AG04449 (cell line): ENCODE measurements at regions of chr2 and their contacts with region 1.

Region 1: GRCh38 chr2:176554101-176555048 is 285.1 kb downstream of the MTX2 start:
- DNase-seq: no peak
- H3K4me3 ChIP-seq: peak overlapping the region; percentile 50
- CTCF ChIP-seq: peak; percentile 52

Region 2: GRCh38 chr2:176140513-176141317 is 413.7 kb before region 1 on chr2:
- CTCF ChIA-PET with region 1: interaction called, 119 read pairs
- POLR2A ChIA-PET with region 1: interaction called, 16 read pairs
- DNase-seq: no peak
- H3K4me3 ChIP-seq: peak overlapping the region; percentile 71
- CTCF ChIP-seq: peak; percentile 98

Region 3: GRCh38 chr2:176151442-176152369 is 402.7 kb before region 1 on chr2 and contains the start of gene HOXD4:
- CTCF ChIA-PET with region 1: interaction called, 12 read pairs
- POLR2A ChIA-PET with region 1: no interaction called
- DNase-seq: no peak
- H3K4me3 ChIP-seq: peak within 1 kb of the TSS; percentile 39
- CTCF ChIP-seq: no peak

Region 4: DNA sequence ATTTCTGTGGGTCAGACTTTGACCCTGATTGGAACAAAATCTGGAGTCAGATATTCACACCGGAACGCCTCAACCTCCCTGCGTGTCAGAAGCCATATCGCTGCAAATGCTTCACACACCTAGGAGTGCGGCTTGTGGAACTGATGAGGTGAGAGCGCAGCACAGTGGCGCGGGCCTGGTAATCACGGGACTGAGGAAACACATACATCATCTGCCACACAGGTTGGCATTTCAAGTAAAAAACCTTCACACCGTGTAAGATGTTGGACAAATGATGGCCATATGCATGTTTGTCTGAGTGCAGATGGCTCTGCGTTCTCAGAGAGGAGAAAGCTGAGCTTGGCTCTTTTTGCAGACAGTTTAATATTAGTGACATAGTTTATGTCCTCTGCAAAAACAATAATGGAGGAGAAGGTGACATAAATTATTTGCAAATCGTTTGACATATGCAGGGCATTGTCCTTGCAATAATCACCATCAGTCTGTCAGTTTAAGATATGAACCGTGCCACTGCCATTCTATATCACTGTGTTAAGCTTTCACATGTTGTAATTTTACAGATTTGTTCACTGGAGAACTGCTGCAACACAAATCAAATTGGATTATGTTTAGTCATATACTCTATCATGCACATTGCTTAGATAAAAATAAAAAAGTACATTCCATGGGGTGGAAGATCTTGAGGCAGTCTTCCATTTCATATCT is 183.8 kb before region 1 on chr2:
- CTCF ChIA-PET with region 1: no interaction called
- POLR2A ChIA-PET with region 1: no interaction called
- DNase-seq: no peak
- H3K4me3 ChIP-seq: no peak overlapping the region
- CTCF ChIP-seq: no peak

Region 5: GRCh38 chr2:176473177-176473576 is 81.2 kb before region 1 on chr2:
- CTCF ChIA-PET with region 1: interaction called, 10 read pairs
- POLR2A ChIA-PET with region 1: no interaction called
- DNase-seq: no peak
- H3K4me3 ChIP-seq: no peak overlapping the region
- CTCF ChIP-seq: no peak

Region 6: GRCh38 chr2:176565641-176566323 is 11.4 kb after region 1 on chr2:
- CTCF ChIA-PET with region 1: interaction called, 31 read pairs
- POLR2A ChIA-PET with region 1: interaction called, 3 read pairs
- DNase-seq: no peak
- H3K4me3 ChIP-seq: no peak overlapping the region
- CTCF ChIP-seq: no peak

Region 7: DNA sequence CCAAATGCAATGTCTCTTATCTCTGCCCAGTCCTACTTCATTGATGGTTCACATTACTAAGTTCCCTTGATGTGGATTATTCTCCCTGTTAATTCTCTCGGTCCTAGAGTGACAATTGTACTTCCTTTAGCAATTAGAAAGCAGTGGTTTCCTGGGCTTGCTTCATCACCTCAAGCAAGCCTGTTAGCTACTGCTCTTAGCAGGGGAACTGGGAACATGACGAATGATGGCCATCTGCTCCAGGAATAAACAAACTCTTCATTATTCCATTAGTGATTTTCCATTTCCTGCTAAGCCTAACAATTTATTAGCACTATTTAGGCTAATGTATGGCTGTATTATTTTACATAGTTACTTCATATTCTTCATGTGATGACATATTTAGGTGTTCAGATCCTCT is 46.7 kb after region 1 on chr2:
- CTCF ChIA-PET with region 1: no interaction called
- POLR2A ChIA-PET with region 1: no interaction called
- DNase-seq: no peak
- H3K4me3 ChIP-seq: no peak overlapping the region
- CTCF ChIP-seq: no peak

Region 8: DNA sequence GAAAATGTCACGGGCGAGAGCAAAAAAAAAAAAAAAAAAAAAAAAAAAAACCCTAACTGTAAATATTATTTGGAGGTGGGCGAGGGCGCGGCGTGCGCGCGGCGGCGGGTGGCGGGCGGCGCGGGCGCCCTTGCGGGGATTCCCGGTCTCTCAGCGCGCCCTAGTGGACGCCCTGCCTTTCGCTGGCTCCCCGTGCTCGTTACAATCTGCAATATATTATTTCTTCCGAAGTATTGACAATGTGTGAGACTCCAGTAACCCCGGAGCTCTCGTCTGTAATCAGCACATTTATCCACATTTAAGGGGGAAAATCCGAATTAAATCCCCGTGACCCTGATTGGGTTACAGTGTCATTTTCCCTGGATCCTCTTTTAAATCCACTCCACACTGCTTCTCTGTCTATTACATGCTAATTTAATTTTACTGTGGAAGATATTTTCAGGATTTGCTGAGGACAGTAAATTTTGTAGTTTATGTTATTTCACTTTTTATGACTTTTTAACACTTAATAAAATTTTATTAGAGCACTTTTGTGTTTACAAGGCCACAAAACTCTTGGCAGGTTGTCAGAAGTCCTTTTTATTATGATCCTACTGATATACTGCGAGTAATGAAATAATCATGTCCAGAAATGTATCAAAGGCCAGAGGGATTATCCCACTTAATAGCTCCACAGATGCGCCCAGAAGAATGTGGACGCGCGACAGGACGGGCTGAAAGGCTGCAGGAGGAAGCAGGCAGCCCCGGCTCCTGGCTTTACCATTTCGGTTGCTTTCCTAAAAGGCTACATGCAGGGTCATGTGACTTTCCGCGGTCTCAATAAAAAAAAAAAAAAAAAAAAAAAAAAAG is 84.0 kb after region 1 on chr2:
- CTCF ChIA-PET with region 1: interaction called, 64 read pairs
- POLR2A ChIA-PET with region 1: interaction called, 4 read pairs
- DNase-seq: no peak
- H3K4me3 ChIP-seq: peak overlapping the region; percentile 66
- CTCF ChIP-seq: peak; percentile 67